Activated CD8-positive, alpha-beta T cell treated with anti-CD3 and anti-CD28 coated beads, Interleukin-2, amount 10 ng/mL, durations not matched to agents 7 days and 5 days (primary cell): ENCODE measurements at regions of chr14 and their contacts with region 1.

Region 1: GRCh38 chr14:76918751-76919543 is 92.7 kb downstream of the LRRC74A start:
- DNase-seq: no peak
- ATAC-seq: no peak
- H3K4me3 Mint-ChIP-seq: no peak overlapping the region
- H3K27ac Mint-ChIP-seq: peak overlapping the region; percentile 81
- H3K4me1 Mint-ChIP-seq: peaks cover 72% of the 10 kb centered on the region
- H3K27me3 Mint-ChIP-seq: no peaks in the 10 kb centered on the region

Region 2: DNA sequence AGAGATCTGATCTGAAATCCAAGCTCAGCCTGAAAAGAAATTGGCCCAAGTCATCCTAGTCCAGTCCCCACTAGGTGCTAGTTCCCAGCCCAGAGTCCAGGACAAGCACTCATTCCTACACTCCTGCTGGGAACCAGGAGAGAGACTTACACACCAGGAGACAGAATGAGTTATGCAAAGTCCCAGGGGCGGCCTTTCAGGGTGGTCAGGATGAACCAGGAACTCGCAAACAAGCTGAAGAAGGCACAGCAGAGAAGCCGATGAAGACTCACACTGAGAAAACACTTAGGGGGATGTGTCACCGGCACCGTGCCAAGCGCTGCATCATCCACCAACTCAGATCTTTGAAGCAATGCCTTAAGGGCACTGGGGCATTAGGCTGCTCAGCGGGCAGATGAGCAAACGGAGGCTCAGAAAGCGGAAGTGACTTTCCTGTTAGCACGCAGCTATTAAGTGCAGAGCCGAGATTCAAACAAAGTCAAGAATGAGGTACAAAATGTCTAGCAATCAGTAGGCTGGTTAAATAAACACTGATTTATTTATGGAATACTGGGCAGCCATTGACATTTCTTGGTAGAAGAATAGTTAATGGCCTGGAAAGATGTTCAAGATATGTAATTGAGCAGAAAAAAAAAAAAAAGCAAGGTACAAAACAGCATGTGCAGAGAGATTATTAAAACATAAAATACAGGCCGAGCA is 14.1 kb before region 1 on chr14:
- CTCF ChIA-PET with region 1: interaction called, 14 read pairs
- POLR2A ChIA-PET with region 1: no interaction called
- DNase-seq: peak; percentile 75
- ATAC-seq: peak; percentile 59
- H3K4me3 Mint-ChIP-seq: no peak overlapping the region
- H3K27ac Mint-ChIP-seq: peak overlapping the region; percentile 50
- H3K4me1 Mint-ChIP-seq: peaks cover 42% of the 10 kb centered on the region
- H3K27me3 Mint-ChIP-seq: no peaks in the 10 kb centered on the region

Region 3: DNA sequence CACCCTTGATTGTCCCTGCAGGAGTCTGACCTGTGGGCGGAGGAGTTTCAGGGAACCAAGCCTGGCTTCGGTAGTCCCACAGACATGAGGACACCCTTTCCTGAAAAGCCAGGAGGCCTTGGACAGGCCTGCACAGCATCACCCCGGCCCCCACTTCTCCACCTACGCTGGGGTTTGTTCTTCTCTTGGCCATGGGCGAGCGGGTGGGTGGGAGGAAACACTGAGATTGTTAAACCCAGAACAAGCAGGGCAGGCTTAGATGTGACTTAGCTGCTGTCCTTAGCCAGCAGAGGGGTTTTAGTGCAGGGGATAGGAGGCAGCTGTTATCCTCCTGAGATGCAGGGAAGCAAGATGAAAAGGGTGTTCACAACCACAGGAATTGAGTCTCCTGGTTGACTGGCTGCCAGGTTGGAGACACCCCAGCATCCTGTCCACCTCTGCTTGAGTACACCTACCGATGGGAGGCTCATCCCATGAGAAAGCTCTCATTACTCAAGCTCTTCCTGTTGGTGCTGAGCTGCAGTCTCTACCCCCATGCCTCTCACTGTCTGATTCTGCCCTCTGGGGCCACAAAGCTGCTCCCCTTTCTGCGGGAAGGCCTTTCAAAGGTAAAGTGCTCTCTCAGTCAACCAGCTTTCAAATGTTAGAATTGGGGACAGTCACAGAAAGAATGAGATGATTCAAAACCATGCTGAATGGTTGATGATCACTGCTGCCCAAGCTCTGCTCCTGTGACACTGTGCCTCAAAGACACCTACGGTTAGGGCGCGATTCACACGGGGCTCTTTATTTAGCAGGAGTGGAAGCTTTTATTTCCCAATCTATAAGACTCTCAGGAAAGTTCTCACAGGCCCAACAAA is 23.2 kb after region 1 on chr14:
- CTCF ChIA-PET with region 1: interaction called, 23 read pairs
- POLR2A ChIA-PET with region 1: no interaction called
- DNase-seq: no peak
- ATAC-seq: no peak
- H3K4me3 Mint-ChIP-seq: no peak overlapping the region
- H3K27ac Mint-ChIP-seq: peak overlapping the region; percentile 28
- H3K4me1 Mint-ChIP-seq: peaks cover 23% of the 10 kb centered on the region
- H3K27me3 Mint-ChIP-seq: no peaks in the 10 kb centered on the region

Region 4: DNA sequence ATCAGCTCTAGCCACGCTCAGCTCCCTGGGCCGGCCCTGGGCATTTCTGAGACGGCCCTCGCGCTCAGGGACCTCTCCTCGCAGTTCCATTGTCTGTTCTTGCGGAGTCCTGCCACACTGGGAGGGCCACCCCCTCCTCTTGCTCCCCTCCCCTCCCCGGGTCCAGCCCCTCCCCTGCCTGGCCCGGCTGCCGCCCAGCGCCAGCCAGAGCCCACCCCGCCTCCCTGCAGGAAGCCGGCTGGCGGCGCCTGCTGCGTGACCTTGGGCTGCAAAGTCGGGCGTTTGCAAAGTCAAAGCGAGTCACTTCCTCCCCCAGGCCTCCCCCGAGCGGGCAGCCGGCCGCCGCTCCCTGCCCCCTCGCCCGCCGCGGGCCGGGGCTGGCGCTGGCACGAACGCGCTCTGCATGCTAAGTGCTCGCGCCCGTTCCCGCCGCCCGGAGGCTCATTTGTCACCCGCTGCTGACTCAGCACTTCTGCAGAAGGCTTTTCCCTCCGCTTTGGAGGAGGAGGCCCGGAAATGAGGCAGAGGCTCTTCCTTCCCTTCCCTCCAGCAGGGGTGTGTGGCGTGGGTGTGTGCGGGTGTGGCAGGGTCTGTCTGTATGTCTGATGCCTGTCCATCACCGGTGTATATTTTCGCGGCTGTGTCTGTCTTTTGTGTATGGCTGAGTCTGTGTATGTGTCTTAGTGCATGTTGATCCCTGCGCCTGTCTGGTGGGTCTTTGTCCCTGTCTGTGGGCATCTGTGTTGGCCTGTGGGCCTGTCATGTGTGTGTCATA is 37.6 kb after region 1 on chr14:
- CTCF ChIA-PET with region 1: interaction called, 33 read pairs
- POLR2A ChIA-PET with region 1: interaction called, 17 read pairs
- DNase-seq: peak; percentile 93
- ATAC-seq: peak; percentile 56
- H3K4me3 Mint-ChIP-seq: peak overlapping the region; percentile 72
- H3K27ac Mint-ChIP-seq: peak overlapping the region; percentile 92
- H3K4me1 Mint-ChIP-seq: peaks cover 83% of the 10 kb centered on the region
- H3K27me3 Mint-ChIP-seq: no peaks in the 10 kb centered on the region

Region 5: GRCh38 chr14:77028384-77029231 is 109.7 kb after region 1 on chr14 and contains the start of gene IRF2BPL:
- CTCF ChIA-PET with region 1: interaction called, 15 read pairs
- POLR2A ChIA-PET with region 1: interaction called, 16 read pairs
- DNase-seq: peak; percentile 96
- ATAC-seq: peak; percentile 76
- H3K4me3 Mint-ChIP-seq: peak within 1 kb of the TSS; percentile 94
- H3K27ac Mint-ChIP-seq: peak within 1 kb of the TSS; percentile 88
- H3K4me1 Mint-ChIP-seq: peaks cover 63% of the 10 kb centered on the region
- H3K27me3 Mint-ChIP-seq: no peaks in the 10 kb centered on the region
- total RNA-seq, gene IRF2BPL: 34.5 to 35.6 TPM

Region 6: DNA sequence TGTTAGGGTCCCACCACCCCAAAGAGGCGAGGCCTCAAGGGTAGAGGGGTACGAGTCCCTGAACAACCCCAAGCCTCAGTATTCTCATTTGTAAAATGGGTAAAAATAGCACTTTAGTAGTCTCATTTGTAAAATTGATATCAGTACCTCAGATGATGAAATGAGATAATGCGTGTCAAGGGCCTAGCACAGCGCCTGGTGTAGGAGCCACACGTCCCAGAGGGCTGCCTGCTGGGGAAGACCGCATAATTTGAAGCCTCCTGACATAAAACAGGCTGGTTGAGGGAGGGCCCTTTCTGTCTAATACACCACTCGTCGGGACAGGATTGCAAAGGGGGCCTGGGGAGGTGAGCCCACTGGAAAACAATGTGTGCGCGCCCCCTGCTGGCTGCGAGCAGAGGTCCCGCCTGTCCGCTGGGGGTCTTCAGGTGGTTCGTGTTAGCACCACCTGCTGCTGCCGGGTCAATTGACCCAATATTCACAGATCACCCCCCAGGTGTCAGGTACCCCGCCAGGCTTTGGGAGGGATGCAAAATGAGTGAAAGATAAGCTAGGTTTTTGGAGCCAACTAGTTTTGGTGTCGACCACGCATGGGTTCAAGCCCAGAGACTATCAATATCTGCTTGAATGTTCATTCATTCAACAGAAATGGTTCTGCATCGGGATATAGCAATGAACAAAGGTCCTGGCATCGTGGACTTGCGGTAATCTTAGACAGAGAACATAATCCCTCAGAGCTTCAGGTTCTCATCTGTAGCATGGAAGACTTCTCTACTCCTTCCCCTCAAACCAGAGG is 134.3 kb after region 1 on chr14:
- CTCF ChIA-PET with region 1: interaction called, 89 read pairs
- POLR2A ChIA-PET with region 1: interaction called, 3 read pairs
- DNase-seq: peak; percentile 85
- ATAC-seq: peak; percentile 96
- H3K4me3 Mint-ChIP-seq: no peak overlapping the region
- H3K27ac Mint-ChIP-seq: peak overlapping the region; percentile 68
- H3K4me1 Mint-ChIP-seq: peaks cover 28% of the 10 kb centered on the region
- H3K27me3 Mint-ChIP-seq: no peaks in the 10 kb centered on the region